ENCODE measurements at regions of chr3 and their contacts with region 1.

Region 1: DNA sequence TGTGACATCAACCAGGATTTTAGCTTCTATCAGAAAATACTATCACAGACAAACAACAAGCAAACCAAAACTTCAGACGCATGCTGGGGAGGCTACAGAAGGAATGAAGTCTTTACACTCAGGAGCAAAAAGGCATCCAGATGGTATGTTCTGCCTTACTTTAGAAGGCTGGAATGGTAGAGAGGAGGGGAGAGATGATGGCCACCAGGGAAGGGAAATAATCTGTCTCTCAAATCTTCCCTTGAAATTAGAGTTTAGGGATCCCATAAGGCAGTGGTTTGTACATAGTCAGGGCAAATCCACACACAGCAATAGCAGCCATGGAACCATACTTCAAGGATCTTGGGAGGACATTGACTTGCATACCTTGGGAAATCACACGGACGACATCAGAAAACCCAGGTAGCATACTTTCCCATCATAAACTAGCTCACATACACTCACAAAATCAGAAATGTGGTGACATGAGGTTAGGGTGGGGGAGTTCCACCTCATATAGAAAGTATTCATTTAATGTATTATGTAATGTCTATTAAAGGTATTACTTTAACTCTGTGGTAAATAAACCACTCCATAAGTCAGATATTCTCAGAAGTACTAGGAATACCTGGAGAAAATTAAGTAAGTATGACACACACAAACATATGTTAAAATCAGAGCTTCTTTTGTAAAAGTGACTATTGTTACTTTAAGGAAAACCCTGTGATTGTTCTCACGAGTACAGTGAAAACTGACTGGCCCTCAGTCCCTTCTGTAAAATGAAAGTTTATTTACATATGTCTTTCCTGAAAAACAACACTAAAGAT is 9.4 kb downstream of the BTLA start:
- DNase-seq: peak; percentile 75
- ATAC-seq: peak; percentile 61
- H3K4me3 ChIP-seq: peak overlapping the region; percentile 51
- H3K27ac ChIP-seq: peak overlapping the region; percentile 97
- H3K4me1 ChIP-seq: peaks cover 13% of the 10 kb centered on the region; the same call in 1 of the 2 replicates
- H3K27me3 ChIP-seq: no peaks in the 10 kb centered on the region
- CTCF ChIP-seq: no peak
- EP300 ChIP-seq: peak in 1 of 2 experiments; percentile 27; a peak in 1 of 4 replicates
- POLR2A ChIP-seq: no peak
- RAD21 ChIP-seq: 0 out of 2 replicates have a peak, but pooled peaks have one; percentile 22

Region 2: GRCh38 chr3:112117841-112118571 is 371.9 kb before region 1 on chr3:
- CTCF ChIA-PET with region 1: interaction called, 4 read pairs
- POLR2A ChIA-PET with region 1: interaction called, 11 read pairs
- RAD21 ChIA-PET with region 1: interaction called, 46 read pairs
- SMC1A ChIA-PET with region 1: interaction called, 6 read pairs
- in situ Hi-C with region 1: no loop called
- intact Hi-C with region 1: no loop called
- DNase-seq: no peak
- ATAC-seq: peak; percentile 48
- H3K4me3 ChIP-seq: peak overlapping the region; percentile 48; the same call in 1 of the 2 replicates
- H3K27ac ChIP-seq: peak overlapping the region; percentile 95
- H3K4me1 ChIP-seq: peaks cover 92% of the 10 kb centered on the region
- H3K27me3 ChIP-seq: no peaks in the 10 kb centered on the region
- CTCF ChIP-seq: peak; percentile 32 to 34 (median 33); a peak in 5 of 6 replicates
- EP300 ChIP-seq: no peak
- POLR2A ChIP-seq: peak; percentile 47; the same call in 1 of the 2 replicates
- RAD21 ChIP-seq: peak; percentile 43

Region 3: DNA sequence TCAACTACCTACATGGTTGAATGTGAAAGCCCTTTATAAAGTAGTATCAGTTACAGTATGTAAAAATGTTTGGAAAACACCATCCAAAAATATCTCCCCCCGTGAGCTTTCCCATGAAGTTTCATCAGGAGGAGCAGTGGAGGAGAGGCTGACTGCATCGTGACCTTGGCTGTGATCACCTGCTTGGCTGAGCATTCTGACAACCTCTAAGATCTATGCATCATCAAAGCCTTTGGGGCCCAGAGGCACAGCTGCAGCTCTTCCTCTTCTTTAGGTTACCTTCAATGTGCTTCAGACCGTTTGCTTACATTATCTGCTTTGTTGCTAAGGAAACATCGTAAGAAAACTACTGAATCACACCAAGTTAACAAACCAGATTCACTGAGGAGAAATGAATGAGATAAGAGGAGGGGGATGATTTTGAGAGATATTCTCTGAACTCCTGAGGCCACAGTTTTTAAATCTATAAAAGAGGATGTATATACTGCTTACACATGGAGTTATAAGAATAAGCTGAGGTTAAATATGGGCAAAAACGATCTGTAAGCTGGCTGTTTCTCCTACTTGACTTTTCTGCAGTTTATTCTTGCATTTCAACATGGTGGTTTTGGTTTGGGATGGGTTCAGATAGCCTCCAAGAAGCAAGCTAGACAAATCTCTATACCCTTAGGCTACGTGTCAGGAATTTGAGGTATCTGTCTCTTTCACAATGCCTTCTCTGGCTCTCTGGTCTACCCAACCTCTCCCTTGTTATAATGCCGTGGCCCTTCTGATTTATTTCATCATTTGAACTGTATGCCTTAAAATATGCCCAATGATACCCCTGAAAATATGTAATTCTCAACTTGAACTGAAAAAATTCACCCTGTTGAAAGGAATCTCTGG is 360.8 kb before region 1 on chr3:
- CTCF ChIA-PET with region 1: interaction called, 3 read pairs
- POLR2A ChIA-PET with region 1: interaction called, 33 read pairs
- RAD21 ChIA-PET with region 1: interaction called, 48 read pairs
- SMC1A ChIA-PET with region 1: interaction called, 15 read pairs
- in situ Hi-C with region 1: no loop called
- intact Hi-C with region 1: loop called (anchors 10 kb)
- DNase-seq: no peak
- ATAC-seq: peak; percentile 60
- H3K4me3 ChIP-seq: peak overlapping the region; percentile 78
- H3K27ac ChIP-seq: peak overlapping the region; percentile 99
- H3K4me1 ChIP-seq: peaks cover 46% of the 10 kb centered on the region
- H3K27me3 ChIP-seq: no peaks in the 10 kb centered on the region
- CTCF ChIP-seq: no peak
- EP300 ChIP-seq: peak in 1 of 2 experiments; percentile 59; a peak in 2 of 4 replicates
- POLR2A ChIP-seq: peak; percentile 66; the same call in 1 of the 2 replicates
- RAD21 ChIP-seq: no peak

Region 4: DNA sequence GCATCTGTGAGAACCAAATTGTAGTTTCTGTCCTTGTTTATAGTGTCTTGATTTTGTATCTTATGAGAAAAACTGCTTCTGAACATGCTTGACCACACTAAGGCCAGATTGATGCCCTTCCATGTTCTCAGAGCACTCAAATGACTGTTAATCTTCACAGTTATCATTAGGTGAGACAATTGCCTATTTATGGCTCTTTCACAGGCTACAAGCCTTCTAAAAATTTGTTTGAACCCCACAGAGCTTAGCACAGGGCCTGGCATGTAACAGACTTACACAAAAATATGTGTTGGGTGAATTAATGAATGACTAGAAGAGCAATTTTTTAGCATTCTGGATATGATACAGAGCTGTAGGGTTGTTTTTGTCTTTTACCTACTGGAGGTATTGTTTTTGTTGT is 33.7 kb before region 1 on chr3:
- CTCF ChIA-PET with region 1: no interaction called
- POLR2A ChIA-PET with region 1: interaction called, 23 read pairs
- RAD21 ChIA-PET with region 1: interaction called, 262 read pairs
- SMC1A ChIA-PET with region 1: interaction called, 57 read pairs
- in situ Hi-C with region 1: no loop called
- intact Hi-C with region 1: loop called (anchors 1 kb)
- DNase-seq: no peak
- ATAC-seq: peak; percentile 46
- H3K4me3 ChIP-seq: no peak overlapping the region
- H3K27ac ChIP-seq: peak overlapping the region; percentile 61
- H3K4me1 ChIP-seq: peaks cover 17% of the 10 kb centered on the region
- H3K27me3 ChIP-seq: no peaks in the 10 kb centered on the region
- CTCF ChIP-seq: no peak
- EP300 ChIP-seq: peak; percentile 59 to 68; a peak in 1 of 4 replicates
- POLR2A ChIP-seq: no peak
- RAD21 ChIP-seq: peak; percentile 21; the same call in 1 of the 2 replicates

Region 5: DNA sequence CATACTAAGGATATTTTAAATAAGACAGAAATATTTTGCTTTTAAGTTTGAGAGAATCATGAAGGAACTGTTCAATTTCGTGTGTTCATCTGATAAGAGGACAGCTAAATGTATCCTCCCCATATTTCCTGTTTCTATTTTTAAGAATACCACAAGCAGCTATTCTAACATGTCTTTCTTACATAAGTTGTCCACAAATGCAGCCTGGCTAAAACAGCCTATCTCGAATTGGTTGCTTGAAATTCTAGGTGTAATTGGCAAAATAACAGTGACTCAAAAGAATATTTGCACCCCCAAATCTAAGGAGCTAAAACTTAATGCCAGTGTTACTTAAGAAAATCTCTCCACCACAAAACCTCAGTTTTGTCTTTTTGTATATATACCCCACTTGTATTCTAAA is 25.6 kb before region 1 on chr3:
- CTCF ChIA-PET with region 1: interaction called, 24 read pairs
- POLR2A ChIA-PET with region 1: interaction called, 23 read pairs
- RAD21 ChIA-PET with region 1: interaction called, 262 read pairs
- SMC1A ChIA-PET with region 1: interaction called, 93 read pairs
- in situ Hi-C with region 1: no loop called
- intact Hi-C with region 1: loop called (anchors 1 kb)
- DNase-seq: peak; percentile 67
- ATAC-seq: peak; percentile 45
- H3K4me3 ChIP-seq: peak overlapping the region; percentile 16; the same call in 1 of the 2 replicates
- H3K27ac ChIP-seq: peak overlapping the region; percentile 77
- H3K4me1 ChIP-seq: peaks cover 61% of the 10 kb centered on the region
- H3K27me3 ChIP-seq: no peaks in the 10 kb centered on the region
- CTCF ChIP-seq: no peak
- EP300 ChIP-seq: peak; percentile 10 to 78; a peak in 2 of 4 replicates
- POLR2A ChIP-seq: no peak
- RAD21 ChIP-seq: no peak

Region 6: GRCh38 chr3:112473212-112473640 is 16.7 kb before region 1 on chr3:
- CTCF ChIA-PET with region 1: interaction called, 4 read pairs
- POLR2A ChIA-PET with region 1: interaction called, 5 read pairs
- RAD21 ChIA-PET with region 1: interaction called, 262 read pairs
- SMC1A ChIA-PET with region 1: interaction called, 93 read pairs
- in situ Hi-C with region 1: no loop called
- intact Hi-C with region 1: no loop called
- DNase-seq: no peak
- ATAC-seq: peak; percentile 64
- H3K4me3 ChIP-seq: no peak overlapping the region
- H3K27ac ChIP-seq: peak overlapping the region; percentile 72
- H3K4me1 ChIP-seq: peaks cover 32% of the 10 kb centered on the region
- H3K27me3 ChIP-seq: no peaks in the 10 kb centered on the region
- CTCF ChIP-seq: no peak
- EP300 ChIP-seq: no peak
- POLR2A ChIP-seq: no peak
- RAD21 ChIP-seq: no peak

Region 7: DNA sequence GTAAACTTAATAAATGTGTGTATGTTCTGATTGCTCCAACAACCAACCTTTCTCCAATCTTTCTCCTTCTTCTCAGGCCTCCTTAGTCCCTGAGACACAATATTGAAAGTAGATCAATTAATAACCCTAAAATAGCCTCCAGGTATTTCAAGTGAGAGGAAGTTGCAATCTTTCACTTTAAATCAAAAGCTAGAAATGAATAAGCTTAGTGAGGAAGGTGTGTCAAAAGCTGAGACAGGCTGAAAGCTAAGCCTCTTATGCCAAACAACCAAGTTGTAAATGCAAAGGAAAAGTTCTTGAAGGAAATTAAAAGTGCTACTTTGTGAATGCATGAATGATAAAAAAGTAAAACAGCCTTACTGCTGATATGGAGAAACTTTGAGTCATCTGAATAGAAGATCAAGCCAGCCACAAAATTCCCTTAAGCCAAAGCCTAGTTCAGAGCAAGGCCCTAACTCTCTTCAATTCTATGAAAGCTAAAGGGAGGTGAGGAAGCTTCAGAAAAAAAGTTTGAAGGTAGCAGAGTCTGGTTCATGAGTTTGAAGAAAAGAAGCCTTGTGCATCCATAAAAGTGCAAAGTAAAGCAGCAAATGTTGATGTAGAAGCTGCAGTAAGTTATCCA is 112.5 kb after region 1 on chr3:
- CTCF ChIA-PET with region 1: no interaction called
- POLR2A ChIA-PET with region 1: no interaction called
- RAD21 ChIA-PET with region 1: no interaction called
- SMC1A ChIA-PET with region 1: no interaction called
- in situ Hi-C with region 1: no loop called
- intact Hi-C with region 1: no loop called
- DNase-seq: peak; percentile 13
- ATAC-seq: peak; percentile 82
- H3K4me3 ChIP-seq: no peak overlapping the region
- H3K27ac ChIP-seq: no peak overlapping the region
- H3K4me1 ChIP-seq: peaks cover 16% of the 10 kb centered on the region
- H3K27me3 ChIP-seq: peaks cover 0 to 5% of the 10 kb centered on the region in 2 experiments; a peak in 2 of 4 replicates
- CTCF ChIP-seq: no peak
- EP300 ChIP-seq: no peak
- POLR2A ChIP-seq: no peak
- RAD21 ChIP-seq: no peak